AG04449 (cell line): ENCODE measurements at regions of chr9 and their contacts with region 1.

Region 1: GRCh38 chr9:98848450-98849149 is 41.1 kb downstream of the GALNT12 start:
- DNase-seq: peak; percentile 23
- H3K4me3 ChIP-seq: peak overlapping the region; percentile 31
- CTCF ChIP-seq: peak; percentile 91

Region 2: DNA sequence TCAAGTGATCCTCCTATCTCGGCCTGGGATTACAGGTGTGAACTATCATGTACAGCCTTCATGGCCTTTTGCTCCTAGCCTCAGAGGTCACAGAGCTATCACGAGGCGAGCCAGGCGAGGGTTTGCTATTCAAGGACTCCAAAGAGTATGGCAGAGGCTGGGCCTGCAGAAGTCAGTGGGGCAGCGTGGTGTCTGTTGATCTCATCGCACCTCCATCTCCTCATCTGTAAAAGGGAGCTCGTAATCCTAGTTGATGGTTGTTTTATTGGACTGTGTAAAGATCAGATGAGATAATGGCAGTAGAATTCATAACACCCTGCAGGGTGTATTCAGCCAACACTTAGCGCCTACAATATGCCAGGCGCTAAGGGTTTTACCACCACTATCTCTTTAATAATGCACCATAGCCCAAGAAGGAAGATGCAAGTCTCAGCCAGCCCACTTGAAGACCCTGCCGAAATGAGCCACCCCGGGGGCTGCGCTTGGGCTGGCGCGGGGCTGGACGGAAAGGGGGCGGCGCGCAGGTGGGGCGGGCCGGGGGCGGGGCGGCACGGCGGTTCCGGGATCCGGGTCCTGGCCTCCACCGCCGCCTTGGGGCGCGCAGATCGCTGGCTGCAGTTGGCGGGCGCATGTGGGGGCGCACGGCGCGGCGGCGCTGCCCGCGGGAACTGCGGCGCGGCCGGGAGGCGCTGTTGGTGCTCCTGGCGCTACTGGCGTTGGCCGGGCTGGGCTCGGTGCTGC is 41.4 kb before region 1 on chr9 and contains the start of gene GALNT12:
- CTCF ChIA-PET with region 1: interaction called, 30 read pairs
- POLR2A ChIA-PET with region 1: no interaction called
- DNase-seq: no peak
- H3K4me3 ChIP-seq: peak within 1 kb of the TSS; percentile 50
- CTCF ChIP-seq: no peak

Region 3: DNA sequence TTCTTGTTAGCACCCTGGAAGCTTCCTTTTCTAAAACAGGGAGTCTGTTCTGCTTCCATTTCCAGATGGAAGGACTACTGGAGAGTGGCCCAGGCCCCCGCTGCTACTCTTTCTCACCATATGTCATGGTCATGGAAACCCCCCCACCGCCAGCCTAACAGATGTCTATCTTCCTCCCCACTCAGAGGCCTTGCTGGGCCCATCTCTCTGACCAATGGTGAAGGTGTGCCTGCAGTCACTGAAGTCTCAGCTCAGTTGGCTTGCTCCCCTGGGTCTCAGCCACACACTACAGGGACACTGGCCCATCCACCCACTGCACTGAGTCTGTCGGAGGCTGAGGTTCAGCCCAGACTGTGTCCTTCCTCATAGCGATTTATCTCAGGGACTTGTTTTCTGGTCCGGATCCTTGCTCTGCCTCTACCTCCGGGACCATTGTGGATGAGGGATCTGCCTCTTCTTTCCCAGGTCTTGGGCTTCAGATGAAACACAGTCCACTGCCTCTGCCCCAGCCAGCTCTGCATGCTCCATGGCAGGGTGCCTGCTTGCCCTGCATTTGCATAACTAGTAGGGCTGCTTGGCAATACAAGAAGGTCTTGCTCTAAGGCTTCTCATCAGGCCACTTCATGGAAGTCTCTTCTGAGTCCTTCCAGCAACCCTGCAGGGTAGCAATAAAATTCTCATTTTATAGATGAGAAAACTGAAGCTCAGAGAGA is 10.3 kb before region 1 on chr9:
- CTCF ChIA-PET with region 1: interaction called, 62 read pairs
- POLR2A ChIA-PET with region 1: no interaction called
- DNase-seq: no peak
- H3K4me3 ChIP-seq: no peak overlapping the region
- CTCF ChIP-seq: no peak

Region 4: DNA sequence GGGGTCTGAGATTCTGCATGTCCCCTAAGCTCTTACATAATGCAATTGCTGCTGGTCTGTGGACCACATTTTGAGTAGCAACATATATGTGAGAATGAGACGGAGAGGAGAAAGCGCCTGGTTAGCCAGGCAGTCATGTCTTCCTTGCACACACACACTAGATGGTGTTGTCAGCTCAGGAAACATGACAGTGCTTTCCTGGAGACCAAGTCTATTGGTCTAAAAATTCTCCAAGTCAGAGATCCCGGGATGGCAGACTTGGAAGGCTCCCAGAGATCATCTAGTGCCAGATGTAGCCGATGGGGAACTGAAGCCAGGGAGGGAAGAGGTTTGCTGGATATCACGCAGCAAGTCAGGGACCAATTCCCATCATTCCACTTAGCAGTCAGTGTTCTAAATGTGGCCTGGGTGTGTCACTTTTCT is 12.3 kb after region 1 on chr9:
- CTCF ChIA-PET with region 1: interaction called, 34 read pairs
- POLR2A ChIA-PET with region 1: no interaction called
- DNase-seq: peak; percentile 73
- H3K4me3 ChIP-seq: no peak overlapping the region
- CTCF ChIP-seq: peak; percentile 66

Region 5: DNA sequence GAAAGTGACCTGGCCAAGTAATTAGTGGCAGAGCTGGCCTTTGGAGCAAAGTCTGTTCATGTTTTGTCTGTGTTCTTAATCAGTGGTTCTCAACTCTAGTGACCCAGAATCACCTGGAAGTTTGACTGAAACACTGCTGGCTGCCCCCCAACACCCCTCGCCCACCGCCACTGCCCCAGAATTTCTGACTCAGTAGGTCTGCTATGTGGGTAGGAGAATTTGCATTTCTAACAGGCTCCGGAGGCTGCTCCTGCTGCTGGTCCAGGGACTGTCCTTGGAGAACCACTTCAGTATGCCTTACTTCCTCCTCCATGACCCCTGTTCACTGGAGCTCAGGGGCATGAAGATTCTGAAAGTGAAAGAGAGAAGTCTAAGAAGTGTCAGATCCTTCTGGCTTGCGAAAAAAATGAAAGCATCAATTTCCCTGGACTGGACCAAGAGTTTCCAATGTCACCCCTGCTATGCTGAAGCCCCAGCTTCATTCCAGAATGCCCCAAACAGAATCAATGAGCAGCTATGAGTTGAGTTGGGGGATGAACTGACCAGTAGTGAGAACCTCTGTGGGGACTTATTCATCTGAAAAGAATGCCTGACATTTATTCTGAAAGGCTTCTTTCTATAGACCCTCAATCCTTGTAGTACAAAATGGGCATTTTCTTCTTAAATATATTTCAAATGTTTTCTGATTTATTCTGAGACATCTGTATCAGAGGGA is 74.3 kb after region 1 on chr9:
- CTCF ChIA-PET with region 1: no interaction called
- POLR2A ChIA-PET with region 1: no interaction called
- DNase-seq: no peak
- H3K4me3 ChIP-seq: no peak overlapping the region; the same call in 1 of the 2 replicates
- CTCF ChIP-seq: no peak

Region 6: GRCh38 chr9:98989036-98990000 is 140.7 kb after region 1 on chr9:
- CTCF ChIA-PET with region 1: interaction called, 245 read pairs
- POLR2A ChIA-PET with region 1: no interaction called
- DNase-seq: peak; percentile 97
- H3K4me3 ChIP-seq: no peak overlapping the region
- CTCF ChIP-seq: peak; percentile 30